ENCODE measurements at regions of chr5 and their contacts with region 1.

Region 1: GRCh38 chr5:32109236-32109635 is 64.9 kb downstream of the GOLPH3 start:
- DNase-seq: no peak
- H3K4me3 Mint-ChIP-seq: no peak overlapping the region
- H3K27ac Mint-ChIP-seq: no peak overlapping the region
- H3K4me1 Mint-ChIP-seq: peaks cover 2% of the 10 kb centered on the region
- H3K27me3 Mint-ChIP-seq: no peaks in the 10 kb centered on the region

Region 2: GRCh38 chr5:32092938-32093812 is 16.1 kb before region 1 on chr5:
- CTCF ChIA-PET with region 1: interaction called, 16 read pairs
- POLR2A ChIA-PET with region 1: no interaction called
- DNase-seq: peak; percentile 79
- H3K4me3 Mint-ChIP-seq: no peak overlapping the region
- H3K27ac Mint-ChIP-seq: no peak overlapping the region
- H3K4me1 Mint-ChIP-seq: peaks cover 5% of the 10 kb centered on the region
- H3K27me3 Mint-ChIP-seq: no peaks in the 10 kb centered on the region